ENCODE measurements at regions of chr2 and their contacts with region 1.

Region 1: DNA sequence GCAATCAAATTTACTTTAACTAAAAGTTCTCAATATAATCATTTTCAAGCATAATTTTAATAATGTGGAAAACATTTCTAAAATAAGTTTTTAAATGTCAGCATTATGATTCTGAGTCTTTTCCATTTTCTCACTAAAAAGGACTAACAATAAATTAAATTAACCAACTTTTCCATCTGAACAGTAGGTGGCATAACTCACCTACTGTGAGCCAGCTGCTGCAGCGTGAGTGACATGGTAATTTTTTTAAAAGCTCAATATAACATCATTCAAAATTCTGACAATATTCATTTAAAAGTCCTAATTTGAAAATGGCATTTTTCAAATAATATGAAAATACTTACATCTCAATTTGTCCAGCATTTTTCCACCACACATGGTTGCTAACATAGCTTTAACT is 66.5 kb downstream of the DTNB start:
- DNase-seq: no peak
- H3K4me3 ChIP-seq: no peak overlapping the region
- CTCF ChIP-seq: peak; percentile 20

Region 2: DNA sequence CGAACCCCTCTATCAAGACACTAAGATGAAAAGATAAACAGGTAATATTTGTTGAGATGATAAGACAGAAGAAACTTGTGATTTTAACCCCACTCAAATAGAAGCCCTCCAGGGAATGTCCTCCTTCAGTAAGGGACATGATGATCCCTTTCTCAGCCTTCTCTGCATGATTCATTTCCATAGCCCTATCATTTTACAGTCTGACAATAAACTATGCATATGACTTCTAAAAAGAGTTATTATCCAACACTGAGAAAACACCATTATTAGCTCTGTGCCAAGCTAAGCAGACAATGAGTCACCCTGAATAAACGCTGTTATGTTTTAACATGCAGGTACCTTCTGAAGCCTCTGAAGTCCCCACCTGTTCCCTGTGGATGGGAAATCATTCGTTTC is 11.7 kb after region 1 on chr2:
- CTCF ChIA-PET with region 1: interaction called, 30 read pairs
- POLR2A ChIA-PET with region 1: no interaction called
- DNase-seq: no peak
- H3K4me3 ChIP-seq: no peak overlapping the region
- CTCF ChIP-seq: no peak

Region 3: GRCh38 chr2:25651071-25651470 is 44.2 kb after region 1 on chr2:
- CTCF ChIA-PET with region 1: interaction called, 17 read pairs
- POLR2A ChIA-PET with region 1: no interaction called
- DNase-seq: peak; percentile 4
- H3K4me3 ChIP-seq: no peak overlapping the region
- CTCF ChIP-seq: no peak

Region 4: GRCh38 chr2:25673300-25674076 is 66.6 kb after region 1 on chr2 and contains the start of gene DTNB:
- CTCF ChIA-PET with region 1: interaction called, 262 read pairs
- POLR2A ChIA-PET with region 1: no interaction called
- DNase-seq: no peak
- H3K4me3 ChIP-seq: peak within 1 kb of the TSS; percentile 72
- CTCF ChIP-seq: no peak

Region 5: GRCh38 chr2:25844089-25844488 is 237.2 kb after region 1 on chr2:
- CTCF ChIA-PET with region 1: no interaction called
- POLR2A ChIA-PET with region 1: no interaction called
- DNase-seq: peak; percentile 1
- H3K4me3 ChIP-seq: no peak overlapping the region
- CTCF ChIP-seq: no peak